RWPE1 (cell line): ENCODE measurements at regions of chr3 and their contacts with region 1.

Region 1: GRCh38 chr3:170848292-170848917 is 21.6 kb downstream of the RPL22L1 start:
- DNase-seq: peak; percentile 37
- H3K27ac ChIP-seq: no peak overlapping the region
- CTCF ChIP-seq: peak; percentile 72

Region 2: GRCh38 chr3:170180908-170181879 is 667.2 kb before region 1 on chr3 and contains the start of gene PHC3:
- CTCF ChIA-PET with region 1: no interaction called
- POLR2A ChIA-PET with region 1: interaction called, 13 read pairs
- DNase-seq: peak; percentile 98
- H3K27ac ChIP-seq: peak within 1 kb of the TSS; percentile 89
- CTCF ChIP-seq: no peak

Region 3: DNA sequence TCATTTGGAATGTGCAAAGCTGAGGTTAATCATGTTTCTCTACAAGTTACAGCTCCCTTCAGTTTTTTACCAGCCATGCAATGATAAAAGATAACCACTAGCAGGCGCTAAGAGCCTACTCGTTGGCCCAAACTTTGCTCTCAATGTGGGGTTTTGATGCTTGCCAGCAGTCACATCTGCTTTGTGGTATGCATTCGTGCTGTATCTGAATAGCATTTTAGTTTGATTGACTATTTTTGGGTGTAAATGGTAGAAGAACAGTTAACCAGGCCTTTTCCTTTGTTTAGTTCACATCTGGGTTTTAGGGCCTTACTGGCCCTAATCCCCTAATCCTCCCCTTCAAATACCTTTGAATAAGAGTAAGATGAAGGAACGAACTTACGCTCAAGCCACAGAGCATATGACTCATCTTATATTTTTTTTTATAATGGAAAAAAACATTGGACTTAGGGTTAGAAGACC is 434.2 kb before region 1 on chr3:
- CTCF ChIA-PET with region 1: interaction called, 19 read pairs
- POLR2A ChIA-PET with region 1: no interaction called
- DNase-seq: peak; percentile 59
- H3K27ac ChIP-seq: no peak overlapping the region
- CTCF ChIP-seq: peak; percentile 98

Region 4: GRCh38 chr3:170476291-170476690 is 372.1 kb before region 1 on chr3:
- CTCF ChIA-PET with region 1: no interaction called
- POLR2A ChIA-PET with region 1: no interaction called
- DNase-seq: no peak
- H3K27ac ChIP-seq: no peak overlapping the region
- CTCF ChIP-seq: no peak

Region 5: GRCh38 chr3:170896781-170897180 is 48.4 kb after region 1 on chr3:
- CTCF ChIA-PET with region 1: no interaction called
- POLR2A ChIA-PET with region 1: no interaction called
- DNase-seq: no peak
- H3K27ac ChIP-seq: no peak overlapping the region
- CTCF ChIP-seq: no peak